GM23248 (cell line): ENCODE measurements at regions of chrX and their contacts with region 1.

Region 1: DNA sequence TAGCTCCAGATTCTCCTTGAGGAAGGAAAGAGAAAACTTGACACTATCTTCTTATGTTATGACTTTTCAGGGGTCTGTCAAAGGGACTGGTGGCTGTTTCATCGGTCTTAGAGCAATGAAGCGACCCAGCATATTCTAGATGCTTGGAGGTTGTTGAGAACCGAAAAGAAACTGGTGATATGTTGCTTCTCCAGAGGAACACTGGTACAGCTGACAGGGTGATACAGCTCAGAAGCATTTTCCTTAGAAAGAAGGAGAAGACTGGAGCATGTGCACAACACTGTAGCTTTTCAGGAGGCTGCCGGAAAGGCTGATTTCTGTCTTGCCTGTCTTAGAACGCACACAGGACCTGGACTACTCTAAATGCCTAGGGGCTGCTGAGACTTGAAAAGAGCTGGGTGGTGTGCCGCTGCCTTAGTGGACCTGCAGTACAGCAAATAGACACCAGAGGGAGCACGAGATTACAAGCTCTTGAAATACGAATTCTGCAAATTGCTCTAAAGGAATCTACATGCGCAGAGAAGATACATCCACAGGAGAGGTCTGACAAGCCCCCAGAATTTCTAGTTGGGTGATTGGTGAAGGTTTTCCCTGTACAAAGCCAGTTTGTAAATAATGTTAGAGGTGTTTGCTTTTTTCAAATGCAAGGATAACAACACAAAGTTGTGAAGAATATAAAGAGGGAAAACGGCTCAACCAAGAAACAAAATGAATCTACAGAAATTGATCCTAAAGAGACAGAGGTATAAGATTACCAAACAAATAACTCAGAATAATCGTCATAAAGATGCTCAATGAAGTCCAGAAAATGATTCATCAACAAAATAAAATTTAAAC is 223.1 kb upstream of the DMD start:
- DNase-seq: peak; percentile 39
- H3K4me3 ChIP-seq: no peak overlapping the region
- H3K27ac ChIP-seq: no peak overlapping the region
- H3K4me1 ChIP-seq: no peaks in the 10 kb centered on the region
- H3K27me3 ChIP-seq: no peaks in the 10 kb centered on the region

Region 2: GRCh38 chrX:32745323-32745722 is 689.2 kb before region 1 on chrX:
- in situ Hi-C with region 1: no loop called
- DNase-seq: no peak
- H3K4me3 ChIP-seq: no peak overlapping the region
- H3K27ac ChIP-seq: no peak overlapping the region
- H3K4me1 ChIP-seq: no peaks in the 10 kb centered on the region
- H3K27me3 ChIP-seq: no peaks in the 10 kb centered on the region

Region 3: DNA sequence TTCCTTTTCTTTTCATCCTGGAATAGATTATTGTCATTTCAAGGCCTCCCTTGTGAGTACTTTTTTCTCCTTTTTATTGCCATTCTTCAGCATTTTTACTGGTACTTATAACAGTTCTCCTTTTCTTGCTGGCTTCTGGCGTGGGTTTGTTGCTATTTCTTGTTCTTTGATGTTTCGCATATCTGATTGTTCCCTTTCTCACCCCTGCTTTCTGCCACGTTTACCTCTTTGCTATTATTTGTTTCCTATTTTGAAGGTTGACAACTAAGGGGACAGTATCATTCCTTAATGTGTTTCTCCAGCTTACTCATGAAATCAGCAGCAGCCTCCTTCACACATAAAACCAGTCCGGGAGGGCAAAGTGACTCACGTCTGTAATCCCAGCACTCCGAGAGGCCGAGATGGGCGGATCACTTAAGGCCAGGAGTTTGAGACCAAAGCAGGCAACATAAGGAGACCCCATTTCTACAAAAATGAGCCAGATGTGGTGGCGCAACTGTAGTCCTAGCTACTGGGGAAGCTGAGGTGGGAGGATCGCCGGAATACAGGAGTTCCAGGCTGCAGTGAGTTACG is 295.7 kb before region 1 on chrX:
- in situ Hi-C with region 1: no loop called
- DNase-seq: no peak
- H3K4me3 ChIP-seq: no peak overlapping the region
- H3K27ac ChIP-seq: no peak overlapping the region
- H3K4me1 ChIP-seq: no peaks in the 10 kb centered on the region
- H3K27me3 ChIP-seq: no peaks in the 10 kb centered on the region

Region 4: DNA sequence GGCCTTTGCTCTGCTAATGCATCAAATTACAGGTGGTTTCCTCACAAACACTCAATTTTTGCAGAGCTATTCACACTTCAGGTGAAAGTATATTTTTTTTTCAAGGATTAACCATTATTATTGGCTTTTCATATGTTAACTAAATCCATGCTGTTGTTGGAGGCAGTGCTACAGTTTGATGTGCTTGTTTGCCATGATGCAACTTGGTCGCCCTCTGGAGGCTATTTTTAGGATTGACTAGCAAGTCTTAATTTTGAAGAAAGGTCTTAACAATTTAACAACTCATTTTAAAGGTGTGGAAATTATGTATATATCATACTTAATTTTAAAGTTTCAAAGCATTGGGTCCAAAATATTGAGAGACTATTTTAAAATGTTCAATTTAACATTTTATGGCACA is 866.4 kb after region 1 on chrX:
- in situ Hi-C with region 1: loop called (anchors 10 kb)
- DNase-seq: peak; percentile 28
- H3K4me3 ChIP-seq: no peak overlapping the region
- H3K27ac ChIP-seq: no peak overlapping the region
- H3K4me1 ChIP-seq: no peaks in the 10 kb centered on the region
- H3K27me3 ChIP-seq: no peaks in the 10 kb centered on the region